Activated CD8-positive, alpha-beta T cell treated with anti-CD3 and anti-CD28 coated beads for 36 hours (primary cell): ENCODE measurements at regions of chr7 and their contacts with region 1.

Region 1: GRCh38 chr7:128123291-128124037 is 92.2 kb upstream of the LRRC4 start:
- DNase-seq: no peak
- ATAC-seq: no peak
- H3K4me3 Mint-ChIP-seq: no peak overlapping the region
- H3K27ac Mint-ChIP-seq: no peak overlapping the region
- H3K4me1 Mint-ChIP-seq: peaks cover 6% of the 10 kb centered on the region
- H3K27me3 Mint-ChIP-seq: no peaks in the 10 kb centered on the region
- CTCF ChIP-seq: no peak

Region 2: DNA sequence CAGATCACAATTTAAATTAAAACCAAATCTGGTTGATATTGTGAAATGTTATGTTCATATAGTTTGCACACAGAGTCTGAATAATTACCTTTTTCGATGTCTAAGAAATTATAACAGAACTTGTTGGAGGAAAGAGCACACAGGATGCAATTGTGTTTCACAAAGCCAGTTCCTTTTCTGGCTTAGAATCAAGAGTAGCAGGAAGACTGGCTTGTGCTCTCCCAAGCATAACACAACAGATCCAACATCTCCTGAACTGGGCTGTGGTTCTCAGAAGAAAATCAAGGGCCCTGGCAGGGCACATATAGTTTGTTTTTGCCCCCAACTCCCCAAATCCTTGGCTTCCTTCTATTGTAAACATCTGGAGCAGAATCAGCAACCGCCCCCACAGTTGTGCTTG is 154.9 kb before region 1 on chr7:
- CTCF ChIA-PET with region 1: no interaction called
- POLR2A ChIA-PET with region 1: no interaction called
- intact Hi-C with region 1: no loop called
- DNase-seq: no peak
- ATAC-seq: no peak
- H3K4me3 Mint-ChIP-seq: no peak overlapping the region
- H3K27ac Mint-ChIP-seq: no peak overlapping the region
- H3K4me1 Mint-ChIP-seq: no peaks in the 10 kb centered on the region
- H3K27me3 Mint-ChIP-seq: no peaks in the 10 kb centered on the region
- CTCF ChIP-seq: no peak

Region 3: GRCh38 chr7:128135515-128136214 is 12.2 kb after region 1 on chr7:
- CTCF ChIA-PET with region 1: interaction called, 21 read pairs
- POLR2A ChIA-PET with region 1: no interaction called
- intact Hi-C with region 1: no loop called
- DNase-seq: peak; percentile 85
- ATAC-seq: peak; percentile 97
- H3K4me3 Mint-ChIP-seq: peak overlapping the region; percentile 65
- H3K27ac Mint-ChIP-seq: peak overlapping the region; percentile 28
- H3K4me1 Mint-ChIP-seq: peaks cover 16% of the 10 kb centered on the region
- H3K27me3 Mint-ChIP-seq: peaks cover 19% of the 10 kb centered on the region
- CTCF ChIP-seq: peak; percentile 85